Activated T-helper 2 cell treated with anti-CD3 and anti-CD28 coated beads, Interferon-gamma antibody, Interleukin-2, Interleukin-4, amounts not matched to agents 10 μg/mL and 5 μg/mL and 100 μg/mL, durations not matched to agents 14 hours and 24 hours and 36 hours (primary cell): ENCODE measurements at regions of chr12 and their contacts with region 1.

Region 1: GRCh38 chr12:122225683-122226407 is at the start of gene DIABLO:
- DNase-seq: peak; percentile 100
- H3K4me3 Mint-ChIP-seq: peak within 1 kb of the TSS; percentile 88
- H3K27ac Mint-ChIP-seq: peak within 1 kb of the TSS; percentile 89
- H3K4me1 Mint-ChIP-seq: peaks cover 22% of the 10 kb centered on the region
- H3K27me3 Mint-ChIP-seq: no peaks in the 10 kb centered on the region
- total RNA-seq, gene DIABLO: 54.7 and 56.5 TPM in 2 replicates

Region 2: DNA sequence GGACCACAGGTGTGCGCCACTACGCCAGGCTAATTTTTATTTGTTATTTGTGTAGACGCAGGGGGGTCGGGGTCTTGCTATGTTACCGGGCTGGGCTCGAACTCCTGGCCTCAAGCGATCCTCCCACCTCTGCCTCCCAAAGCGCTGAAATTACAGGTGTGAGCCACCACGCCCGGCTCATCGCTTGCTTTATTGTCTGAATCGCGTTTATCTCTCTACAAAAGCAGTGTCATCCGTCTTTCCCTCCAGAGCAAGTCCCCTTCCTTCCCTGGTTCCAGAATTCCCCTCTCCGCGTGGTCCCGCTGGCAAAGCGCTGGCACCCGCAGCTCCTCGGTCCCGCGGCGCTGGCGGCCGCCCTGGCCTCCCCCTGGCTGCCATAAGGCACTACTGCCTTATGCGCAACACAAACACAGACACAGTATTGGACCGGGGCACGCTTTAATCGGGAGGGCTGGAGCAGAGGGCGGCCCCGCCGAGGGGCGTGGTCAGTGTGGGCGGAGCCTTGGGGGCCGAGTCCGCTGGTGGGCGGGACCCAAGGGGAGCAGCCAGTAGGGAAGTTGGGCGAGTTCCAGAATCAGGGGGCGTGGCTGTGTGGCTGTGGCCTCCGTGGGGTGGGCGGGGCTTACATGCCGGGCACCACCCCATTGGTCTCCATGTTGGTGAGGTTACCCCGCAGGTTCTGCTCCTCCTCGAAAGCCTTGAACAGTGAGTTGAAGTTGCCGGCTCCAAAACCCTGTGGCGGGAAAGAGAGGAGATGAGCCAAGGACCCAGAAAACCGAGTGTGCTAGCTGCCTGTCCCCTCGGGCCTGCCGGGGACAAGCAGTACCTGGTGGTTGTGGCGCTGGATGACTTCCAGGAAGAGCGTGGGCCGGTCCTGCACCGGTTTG is 386.5 kb before region 1 on chr12:
- intact Hi-C with region 1: loop called (anchors 10 kb)
- DNase-seq: peak; percentile 99
- H3K4me3 Mint-ChIP-seq: peak overlapping the region; percentile 97
- H3K27ac Mint-ChIP-seq: peak overlapping the region; percentile 90
- H3K4me1 Mint-ChIP-seq: peaks cover 4% of the 10 kb centered on the region
- H3K27me3 Mint-ChIP-seq: no peaks in the 10 kb centered on the region

Region 3: GRCh38 chr12:122244565-122245371 is 18.9 kb after region 1 on chr12:
- intact Hi-C with region 1: loop called (anchors 2 kb)
- DNase-seq: peak; percentile 26
- H3K4me3 Mint-ChIP-seq: peak overlapping the region; percentile 75
- H3K27ac Mint-ChIP-seq: peak overlapping the region; percentile 93
- H3K4me1 Mint-ChIP-seq: peaks cover 18% of the 10 kb centered on the region
- H3K27me3 Mint-ChIP-seq: no peaks in the 10 kb centered on the region

Region 4: DNA sequence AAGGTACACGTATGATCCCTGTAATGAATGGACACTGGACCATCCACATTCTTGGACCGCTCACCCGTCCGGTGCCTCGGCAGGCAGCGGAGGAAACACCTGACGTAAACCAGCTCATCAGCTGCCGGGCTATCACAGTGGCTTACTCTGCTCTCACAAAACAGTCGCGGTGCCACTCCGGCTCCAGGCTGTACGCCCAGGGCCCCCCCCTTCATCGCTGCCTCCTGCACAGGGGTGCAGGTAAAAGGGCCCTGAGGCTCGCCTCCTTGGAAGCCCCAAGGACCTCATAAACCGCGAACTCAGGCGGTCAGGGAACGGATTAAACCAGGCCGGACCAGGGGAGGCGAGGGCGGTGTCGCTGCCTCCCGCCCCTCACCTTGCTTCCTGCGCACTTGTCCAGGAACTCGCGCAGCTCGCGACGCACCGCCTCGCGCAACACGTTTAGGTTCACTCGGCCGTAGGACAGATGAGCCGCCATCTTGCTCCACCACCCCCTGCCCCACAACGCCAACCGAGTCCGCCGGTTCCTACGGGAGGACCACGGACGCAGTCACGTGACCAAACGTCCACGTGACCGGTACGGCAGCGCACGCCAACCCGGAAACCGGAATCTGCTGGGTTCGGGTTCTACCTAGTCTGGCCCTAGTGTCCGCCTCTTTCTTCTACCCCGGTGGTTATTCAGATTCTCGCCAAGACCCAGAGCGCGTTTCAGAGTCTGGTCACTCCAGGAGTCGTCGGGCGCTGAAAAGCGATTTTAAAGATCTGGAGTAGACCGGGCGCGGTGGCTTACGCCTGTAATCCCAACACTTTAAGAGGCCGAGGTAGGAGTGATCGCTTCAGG is 40.3 kb after region 1 on chr12 and contains the start of gene VPS33A:
- intact Hi-C with region 1: loop called (anchors 1 kb)
- DNase-seq: peak; percentile 95
- H3K4me3 Mint-ChIP-seq: peak within 1 kb of the TSS; percentile 96
- H3K27ac Mint-ChIP-seq: peak within 1 kb of the TSS; percentile 99
- H3K4me1 Mint-ChIP-seq: peaks cover 7% of the 10 kb centered on the region
- H3K27me3 Mint-ChIP-seq: no peaks in the 10 kb centered on the region
- total RNA-seq, gene VPS33A: 25.3 and 26.8 TPM in 2 replicates